ENCODE measurements at regions of chr5 and their contacts with region 1.

Region 1: DNA sequence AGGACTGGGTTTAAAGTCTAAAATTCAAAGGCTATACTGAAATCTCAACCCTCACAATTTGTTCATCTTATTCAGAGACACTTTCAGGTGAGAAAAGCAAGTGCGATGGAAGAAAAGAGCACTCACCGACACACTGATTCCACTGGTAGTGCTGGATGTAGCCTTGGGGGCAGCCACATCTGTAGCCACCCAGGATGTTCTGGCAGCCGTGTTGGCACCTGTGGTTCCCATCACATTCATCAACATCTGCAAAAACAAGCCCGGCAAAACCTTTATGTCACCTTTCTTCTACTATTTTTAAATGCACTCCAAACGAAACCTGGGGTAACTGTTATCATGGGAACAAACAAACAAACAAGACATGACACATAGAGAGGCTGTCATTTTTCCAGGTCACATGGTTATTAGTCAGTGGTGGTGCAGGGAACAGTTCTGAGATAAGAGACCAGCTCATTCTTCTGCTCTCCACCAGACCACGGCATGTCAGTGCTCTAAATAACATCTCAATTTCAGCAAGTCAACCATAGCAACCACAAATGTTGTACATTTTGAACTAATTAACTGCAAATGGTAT is 188.4 kb downstream of the SLC12A2 start:
- DNase-seq: no peak
- ATAC-seq: no peak
- H3K4me3 ChIP-seq: no peak overlapping the region
- H3K4me3 Mint-ChIP-seq: no peak overlapping the region
- H3K27ac ChIP-seq: no peak overlapping the region
- H3K27ac Mint-ChIP-seq: no peak overlapping the region
- H3K4me1 ChIP-seq: no peaks in the 10 kb centered on the region
- H3K4me1 Mint-ChIP-seq: no peaks in the 10 kb centered on the region
- H3K27me3 ChIP-seq: no peaks in the 10 kb centered on the region
- H3K27me3 Mint-ChIP-seq: peaks cover 4% of the 10 kb centered on the region
- CTCF ChIP-seq: no peak

Region 2: GRCh38 chr5:128237546-128237945 is 34.4 kb before region 1 on chr5:
- CTCF ChIA-PET with region 1: no interaction called
- POLR2A ChIA-PET with region 1: no interaction called
- intact Hi-C with region 1: loop called in 1 of 2 experiments (anchors 1 kb)
- DNase-seq: no peak
- ATAC-seq: no peak
- H3K4me3 ChIP-seq: no peak overlapping the region
- H3K4me3 Mint-ChIP-seq: no peak overlapping the region
- H3K27ac ChIP-seq: no peak overlapping the region
- H3K27ac Mint-ChIP-seq: no peak overlapping the region
- H3K4me1 ChIP-seq: no peaks in the 10 kb centered on the region
- H3K4me1 Mint-ChIP-seq: no peaks in the 10 kb centered on the region
- H3K27me3 ChIP-seq: no peaks in the 10 kb centered on the region
- H3K27me3 Mint-ChIP-seq: peaks cover 20% of the 10 kb centered on the region
- CTCF ChIP-seq: no peak

Region 3: DNA sequence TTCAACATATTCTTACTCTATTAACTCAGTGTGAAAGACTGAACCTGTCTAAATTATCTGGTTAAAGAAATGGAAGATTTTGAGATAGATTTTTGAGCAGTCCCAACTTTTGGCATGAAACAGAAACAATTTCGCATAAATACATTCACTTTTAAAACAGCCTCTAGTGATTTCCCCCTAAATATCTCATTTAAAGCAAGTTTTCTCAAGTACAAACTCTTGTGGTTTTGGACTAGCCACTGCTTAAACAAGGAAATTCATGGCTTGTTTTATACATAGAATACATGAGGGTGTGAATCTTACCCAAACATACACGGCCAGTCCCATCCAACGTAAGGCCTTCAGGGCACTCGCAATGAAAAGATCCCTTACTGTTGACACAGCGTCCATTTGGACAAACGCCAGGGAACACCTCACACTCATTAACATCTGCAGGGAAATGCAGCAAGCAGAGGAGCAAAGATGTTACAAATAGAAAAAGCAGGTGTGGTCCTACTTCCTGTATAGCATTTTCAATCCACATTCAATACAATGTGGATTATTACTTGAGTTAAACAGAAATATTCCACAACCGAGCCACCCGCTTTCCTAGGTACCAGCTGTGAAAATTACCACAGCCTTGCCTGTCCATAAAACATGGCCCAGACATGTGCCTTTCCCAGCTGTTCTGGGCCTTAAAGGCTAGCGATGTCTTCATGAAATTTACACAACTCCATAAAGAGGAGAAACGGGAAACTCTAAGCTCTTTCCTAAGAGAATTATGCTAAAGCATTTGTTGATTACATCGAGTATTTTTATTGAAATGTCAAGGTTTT is 77.3 kb after region 1 on chr5:
- CTCF ChIA-PET with region 1: no interaction called
- POLR2A ChIA-PET with region 1: no interaction called
- intact Hi-C with region 1: no loop called
- DNase-seq: no peak
- ATAC-seq: no peak
- H3K4me3 ChIP-seq: no peak overlapping the region
- H3K4me3 Mint-ChIP-seq: no peak overlapping the region
- H3K27ac ChIP-seq: no peak overlapping the region
- H3K27ac Mint-ChIP-seq: no peak overlapping the region
- H3K4me1 ChIP-seq: no peaks in the 10 kb centered on the region
- H3K4me1 Mint-ChIP-seq: no peaks in the 10 kb centered on the region
- H3K27me3 ChIP-seq: no peaks in the 10 kb centered on the region
- H3K27me3 Mint-ChIP-seq: no peaks in the 10 kb centered on the region
- CTCF ChIP-seq: no peak

Region 4: DNA sequence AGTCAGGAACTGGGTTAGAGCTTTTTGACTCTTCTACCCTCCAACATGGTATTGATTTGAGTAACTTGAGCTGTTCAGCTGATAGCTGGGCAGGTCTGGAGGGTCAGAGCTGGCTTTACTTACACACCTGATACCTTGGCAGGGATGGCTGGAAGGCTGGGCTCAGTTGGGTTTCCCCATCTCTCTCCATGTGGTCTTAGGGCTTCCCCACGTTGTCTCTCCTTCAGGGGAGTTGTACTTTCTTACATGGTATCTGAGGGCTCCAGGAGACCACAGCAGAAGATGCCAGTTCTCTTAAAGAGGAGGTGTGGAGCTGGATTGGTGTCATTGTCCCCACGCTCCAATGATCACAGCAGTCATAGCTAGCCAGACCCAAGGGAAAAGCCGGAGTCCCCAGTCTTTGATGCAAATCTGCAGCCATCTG is 848.2 kb after region 1 on chr5:
- CTCF ChIA-PET with region 1: no interaction called
- POLR2A ChIA-PET with region 1: no interaction called
- intact Hi-C with region 1: no loop called
- DNase-seq: no peak
- ATAC-seq: no peak
- H3K4me3 ChIP-seq: no peak overlapping the region
- H3K4me3 Mint-ChIP-seq: no peak overlapping the region
- H3K27ac ChIP-seq: no peak overlapping the region
- H3K27ac Mint-ChIP-seq: no peak overlapping the region
- H3K4me1 ChIP-seq: no peaks in the 10 kb centered on the region
- H3K4me1 Mint-ChIP-seq: no peaks in the 10 kb centered on the region
- H3K27me3 ChIP-seq: no peaks in the 10 kb centered on the region
- H3K27me3 Mint-ChIP-seq: no peaks in the 10 kb centered on the region
- CTCF ChIP-seq: no peak

Measured in CD8-positive, alpha-beta T cell (primary cell).